ENCODE measurements at regions of chr22 and their contacts with region 1.

Region 1: DNA sequence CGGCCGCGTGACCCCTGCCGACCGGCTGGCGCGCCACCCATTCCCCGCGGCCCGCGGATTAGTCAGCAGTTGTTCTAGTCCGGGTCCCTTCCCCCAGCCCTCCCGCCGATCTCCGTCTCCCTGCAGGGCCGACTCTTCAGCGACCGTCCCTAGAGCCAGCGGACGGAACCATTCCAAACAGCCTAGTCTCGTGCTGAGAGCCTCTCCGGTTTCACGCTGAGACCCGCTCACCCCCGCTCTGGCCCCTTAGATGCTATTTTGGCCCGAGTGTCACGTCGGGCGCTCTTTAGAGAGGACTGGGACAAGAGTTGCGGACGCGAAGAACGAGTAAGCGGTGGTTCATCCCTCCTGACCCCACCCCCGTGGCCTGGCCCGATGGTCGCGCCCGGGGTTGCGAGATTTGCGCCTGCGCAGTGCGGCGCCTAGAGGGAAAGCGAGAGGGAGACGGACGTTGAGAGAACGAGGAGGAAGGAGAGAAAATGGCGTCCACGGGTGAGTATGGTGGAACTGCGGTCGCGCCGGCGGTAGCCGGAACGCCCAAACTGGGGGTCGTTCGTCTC is at the starts of genes EWSR1 and RHBDD3:
- DNase-seq: peak; percentile 96
- ATAC-seq: peak; percentile 85
- H3K4me3 Mint-ChIP-seq: peak within 1 kb of the TSS; percentile 91
- H3K27ac Mint-ChIP-seq: peak within 1 kb of the TSS; percentile 97
- H3K4me1 Mint-ChIP-seq: peaks cover 37% of the 10 kb centered on the region
- H3K27me3 Mint-ChIP-seq: no peaks in the 10 kb centered on the region
- total RNA-seq, gene EWSR1: 326 to 567 TPM
- total RNA-seq, gene RHBDD3: 23.2 to 25.3 TPM

Region 2: GRCh38 chr22:28741758-28742561 is 526.0 kb before region 1 on chr22 and contains the starts of genes CHEK2 and HSCB:
- CTCF ChIA-PET with region 1: no interaction called
- POLR2A ChIA-PET with region 1: no interaction called
- intact Hi-C with region 1: loop called in 1 of 2 experiments (anchors 1 kb)
- DNase-seq: peak; percentile 99
- ATAC-seq: peak; percentile 93
- H3K4me3 Mint-ChIP-seq: peak within 1 kb of the TSS; percentile 81
- H3K27ac Mint-ChIP-seq: peak within 1 kb of the TSS; percentile 83
- H3K4me1 Mint-ChIP-seq: peaks cover 32% of the 10 kb centered on the region
- H3K27me3 Mint-ChIP-seq: no peaks in the 10 kb centered on the region
- total RNA-seq, gene CHEK2: 37.5 to 41.3 TPM
- total RNA-seq, gene HSCB: 16.5 to 18.5 TPM

Region 3: GRCh38 chr22:28800308-28801077 is 467.4 kb before region 1 on chr22 and contains the start of gene XBP1:
- CTCF ChIA-PET with region 1: no interaction called
- POLR2A ChIA-PET with region 1: no interaction called
- intact Hi-C with region 1: loop called in 1 of 2 experiments (anchors 1 kb)
- DNase-seq: peak; percentile 93
- ATAC-seq: peak; percentile 85
- H3K4me3 Mint-ChIP-seq: peak within 1 kb of the TSS; percentile 84
- H3K27ac Mint-ChIP-seq: peak within 1 kb of the TSS; percentile 99
- H3K4me1 Mint-ChIP-seq: peaks cover 44% of the 10 kb centered on the region
- H3K27me3 Mint-ChIP-seq: no peaks in the 10 kb centered on the region
- total RNA-seq, gene XBP1: 88.8 to 101 TPM

Region 4: DNA sequence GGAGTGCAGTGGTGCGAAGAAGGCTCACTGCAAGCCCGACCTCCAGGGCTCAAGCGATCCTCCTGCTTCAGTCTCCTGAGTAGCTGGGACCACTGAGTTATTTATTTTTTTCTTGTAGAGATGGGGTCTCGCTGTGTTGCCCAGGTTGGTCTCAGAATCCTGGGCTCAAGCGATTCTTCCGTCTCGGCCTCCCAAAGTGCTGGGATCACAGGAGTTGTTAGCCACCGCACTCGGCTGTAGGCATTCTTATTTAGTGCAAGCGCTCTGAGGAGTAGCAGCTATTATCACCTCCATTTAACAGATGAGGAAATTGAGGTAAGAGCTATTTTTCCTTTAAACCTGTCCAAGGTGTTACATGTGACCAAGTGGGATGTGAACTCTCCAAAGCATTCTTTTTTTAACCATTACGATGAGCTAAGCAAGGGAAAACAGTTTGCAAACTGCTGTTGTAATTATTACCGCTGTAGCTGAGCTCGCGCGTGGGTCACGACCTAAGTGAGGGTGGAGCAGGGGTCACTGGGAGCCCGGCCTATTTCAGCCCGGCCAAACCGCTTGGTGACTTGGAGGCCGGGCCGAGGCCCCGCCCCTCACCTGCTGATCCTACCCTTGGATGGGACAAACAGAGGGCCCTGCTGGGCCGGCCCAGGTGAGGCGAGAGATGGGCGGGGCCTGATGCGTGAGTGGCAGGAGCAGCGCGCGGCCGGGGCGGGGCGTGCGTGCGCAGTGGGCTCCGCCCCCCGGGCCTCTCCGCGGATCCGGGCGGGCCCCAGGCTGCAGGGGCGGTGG is 195.6 kb before region 1 on chr22:
- CTCF ChIA-PET with region 1: no interaction called
- POLR2A ChIA-PET with region 1: no interaction called
- intact Hi-C with region 1: loop called in 1 of 2 experiments (anchors 2 kb)
- DNase-seq: peak; percentile 93
- ATAC-seq: peak; percentile 98
- H3K4me3 Mint-ChIP-seq: peak overlapping the region; percentile 66
- H3K27ac Mint-ChIP-seq: no peak overlapping the region
- H3K4me1 Mint-ChIP-seq: peaks cover 15% of the 10 kb centered on the region
- H3K27me3 Mint-ChIP-seq: peaks cover 51% of the 10 kb centered on the region

Region 5: DNA sequence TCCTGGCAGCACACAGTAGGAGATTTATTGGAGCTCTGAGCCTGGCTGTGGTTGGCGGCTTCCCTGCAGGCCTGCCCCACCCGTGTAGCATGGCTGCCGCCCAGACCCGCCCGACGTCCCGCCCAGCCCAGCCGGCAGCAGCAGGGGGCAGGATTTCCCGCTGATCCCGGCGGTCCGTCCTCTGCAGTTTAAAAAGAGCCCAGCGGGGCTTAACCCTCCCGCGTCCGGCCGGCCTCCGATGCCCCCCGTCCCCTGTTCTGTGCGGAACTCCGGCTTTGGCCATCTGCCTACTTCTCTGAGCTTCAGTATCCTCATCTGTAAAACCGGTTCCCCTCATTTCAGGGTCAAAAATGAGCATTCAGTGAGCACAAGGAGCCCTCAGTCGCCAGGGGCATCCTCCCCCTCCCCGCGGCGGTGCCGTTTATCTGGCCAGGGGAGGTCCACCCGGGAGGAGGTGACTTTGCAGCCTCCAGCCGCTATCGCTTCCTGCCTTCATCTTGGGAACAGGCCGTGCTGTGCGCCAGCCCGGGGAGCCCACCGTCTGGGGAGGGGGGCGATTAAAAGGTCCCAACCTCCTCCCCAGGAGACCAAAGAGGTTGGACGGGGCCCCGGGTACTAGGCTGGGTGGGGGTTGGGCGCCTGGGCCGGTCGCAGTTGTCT is 38.4 kb after region 1 on chr22 and contains the start of gene GAS2L1:
- CTCF ChIA-PET with region 1: interaction called, 3 read pairs
- POLR2A ChIA-PET with region 1: interaction called, 3 read pairs
- intact Hi-C with region 1: loop called in 1 of 2 experiments (anchors 5 kb)
- DNase-seq: peak; percentile 76
- ATAC-seq: peak; percentile 58
- H3K4me3 Mint-ChIP-seq: peak within 1 kb of the TSS; percentile 63
- H3K27ac Mint-ChIP-seq: no peak within 1 kb of the TSS
- H3K4me1 Mint-ChIP-seq: peaks cover 14% of the 10 kb centered on the region
- H3K27me3 Mint-ChIP-seq: peaks cover 17% of the 10 kb centered on the region
- total RNA-seq, gene GAS2L1: 0.84 to 0.98 TPM

Region 6: GRCh38 chr22:29375398-29376076 is 107.6 kb after region 1 on chr22:
- CTCF ChIA-PET with region 1: no interaction called
- POLR2A ChIA-PET with region 1: no interaction called
- intact Hi-C with region 1: no loop called
- DNase-seq: peak; percentile 53
- ATAC-seq: peak; percentile 83
- H3K4me3 Mint-ChIP-seq: no peak overlapping the region
- H3K27ac Mint-ChIP-seq: peak overlapping the region; percentile 85
- H3K4me1 Mint-ChIP-seq: peaks cover 26% of the 10 kb centered on the region
- H3K27me3 Mint-ChIP-seq: no peaks in the 10 kb centered on the region

Region 7: GRCh38 chr22:29553351-29554224 is 285.6 kb after region 1 on chr22 and contains the start of gene THOC5:
- CTCF ChIA-PET with region 1: no interaction called
- POLR2A ChIA-PET with region 1: no interaction called
- intact Hi-C with region 1: loop called in 1 of 2 experiments (anchors 1 kb)
- DNase-seq: peak; percentile 94
- ATAC-seq: peak; percentile 99
- H3K4me3 Mint-ChIP-seq: peak within 1 kb of the TSS; percentile 96
- H3K27ac Mint-ChIP-seq: peak within 1 kb of the TSS; percentile 92
- H3K4me1 Mint-ChIP-seq: peaks cover 13% of the 10 kb centered on the region
- H3K27me3 Mint-ChIP-seq: no peaks in the 10 kb centered on the region
- total RNA-seq, gene THOC5: 52.4 to 65.7 TPM